SK-N-SH (cell line): ENCODE measurements at regions of chr11 and their contacts with region 1.

Region 1: GRCh38 chr11:35822815-35823495 is 120.9 kb upstream of the LDLRAD3 start:
- DNase-seq: no peak
- H3K4me3 ChIP-seq: no peak overlapping the region
- H3K27ac ChIP-seq: peak overlapping the region in 1 of 2 experiments; percentile 22; a peak in 2 of 4 replicates
- H3K4me1 ChIP-seq: peaks cover 6 to 12% of the 10 kb centered on the region in 2 experiments; a peak in 3 of 4 replicates
- H3K27me3 ChIP-seq: no peaks in the 10 kb centered on the region
- CTCF ChIP-seq: no peak
- EP300 ChIP-seq: no peak
- RAD21 ChIP-seq: no peak

Region 2: DNA sequence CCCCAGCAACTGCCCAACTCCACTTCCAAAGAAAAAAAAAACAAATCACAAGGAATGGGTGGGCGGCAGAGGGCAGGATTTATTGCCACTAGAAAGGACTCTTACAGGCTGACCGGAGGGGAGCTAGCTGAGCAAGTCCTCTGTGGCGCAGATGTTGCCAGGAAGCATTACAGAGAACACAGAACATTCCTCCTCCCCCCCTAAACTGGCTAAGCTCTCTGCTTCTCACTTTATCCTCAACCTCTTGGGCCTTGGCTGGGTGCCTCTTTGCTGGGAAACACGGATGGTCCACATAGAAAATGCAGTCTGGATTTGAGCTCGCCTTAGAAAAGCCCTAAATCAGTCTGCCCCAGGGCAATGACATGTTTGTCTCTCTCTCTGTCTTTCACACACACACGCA is 217.2 kb before region 1 on chr11:
- CTCF ChIA-PET with region 1: interaction called, 10 read pairs
- POLR2A ChIA-PET with region 1: no interaction called
- DNase-seq: no peak
- H3K4me3 ChIP-seq: no peak overlapping the region
- H3K27ac ChIP-seq: no peak overlapping the region
- H3K4me1 ChIP-seq: peaks cover 3 to 5% of the 10 kb centered on the region in 2 experiments; a peak in 2 of 4 replicates
- H3K27me3 ChIP-seq: no peaks in the 10 kb centered on the region
- CTCF ChIP-seq: no peak
- EP300 ChIP-seq: no peak
- RAD21 ChIP-seq: no peak

Region 3: GRCh38 chr11:35800970-35801953 is 21.7 kb before region 1 on chr11:
- CTCF ChIA-PET with region 1: interaction called, 41 read pairs
- POLR2A ChIA-PET with region 1: no interaction called
- DNase-seq: no peak
- H3K4me3 ChIP-seq: no peak overlapping the region
- H3K27ac ChIP-seq: no peak overlapping the region
- H3K4me1 ChIP-seq: peaks cover 0 to 25% of the 10 kb centered on the region in 2 experiments
- H3K27me3 ChIP-seq: no peaks in the 10 kb centered on the region
- CTCF ChIP-seq: no peak
- EP300 ChIP-seq: no peak
- RAD21 ChIP-seq: no peak

Region 4: DNA sequence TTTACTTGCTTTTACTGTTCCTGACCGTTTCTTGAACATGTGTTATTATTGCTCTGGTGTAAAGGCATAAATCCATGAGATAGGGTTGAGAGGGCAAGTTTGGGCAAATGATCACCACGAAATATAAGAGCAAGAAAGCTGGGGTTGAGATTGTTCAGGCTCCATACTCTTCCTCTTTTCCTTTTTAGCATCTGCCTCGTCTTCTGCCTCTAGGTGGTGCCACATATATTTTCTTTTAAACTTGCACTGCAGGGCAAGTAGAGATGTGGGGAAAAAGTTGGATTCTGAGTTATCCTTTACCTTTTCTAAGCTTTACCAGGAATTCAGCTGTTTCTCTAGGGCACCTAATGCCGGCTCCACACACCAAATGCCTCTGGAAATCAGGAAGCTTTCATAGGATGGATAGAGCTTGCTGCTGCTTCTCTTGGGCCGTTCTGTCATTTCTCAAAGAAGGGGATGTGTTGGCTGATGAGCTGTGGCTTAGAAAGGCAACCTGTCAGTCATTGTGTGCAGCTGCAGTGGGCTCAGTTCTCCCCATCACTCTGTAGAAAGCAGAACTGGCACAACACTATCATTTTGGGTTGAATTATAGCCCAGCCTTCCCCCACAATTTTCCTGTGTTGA is 219.1 kb after region 1 on chr11:
- CTCF ChIA-PET with region 1: interaction called, 17 read pairs
- POLR2A ChIA-PET with region 1: no interaction called
- DNase-seq: no peak
- H3K4me3 ChIP-seq: no peak overlapping the region
- H3K27ac ChIP-seq: no peak overlapping the region
- H3K4me1 ChIP-seq: peaks cover 0 to 5% of the 10 kb centered on the region in 2 experiments; a peak in 1 of 4 replicates
- H3K27me3 ChIP-seq: no peaks in the 10 kb centered on the region
- CTCF ChIP-seq: peak; percentile 50
- EP300 ChIP-seq: no peak
- RAD21 ChIP-seq: peak; percentile 49

Region 5: DNA sequence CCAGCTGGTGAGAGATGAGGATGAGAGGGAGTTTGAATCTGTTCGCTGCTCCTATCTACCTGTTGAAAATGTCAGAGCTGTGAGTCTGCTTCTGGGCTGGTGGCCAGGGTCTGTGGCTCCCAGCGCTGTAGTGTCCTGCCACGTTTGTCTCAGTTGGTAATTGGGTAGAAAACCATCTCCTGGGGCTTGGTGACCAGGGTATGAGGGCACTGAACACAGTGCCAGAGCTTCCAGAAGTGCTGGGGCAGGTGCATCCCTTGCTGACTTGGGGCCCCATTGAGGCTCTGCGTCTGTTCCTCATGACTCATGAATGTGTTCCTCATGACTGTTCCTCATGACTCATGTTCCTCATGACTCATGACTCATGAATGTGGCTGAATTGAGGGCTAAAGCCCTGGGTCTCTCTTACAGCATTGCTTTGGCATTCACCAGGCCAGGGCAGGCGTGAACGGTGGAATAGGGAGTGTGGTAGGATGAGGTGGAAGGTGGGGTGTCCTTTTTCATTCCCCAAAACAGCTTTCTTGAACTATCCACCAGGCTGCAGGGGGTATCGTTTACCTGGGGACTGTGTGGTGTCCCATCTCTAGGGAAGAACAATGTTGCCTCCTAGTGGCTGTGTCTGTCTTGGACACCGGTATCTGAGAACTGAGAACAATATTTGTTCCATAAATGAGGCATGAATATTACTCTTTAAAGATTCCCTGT is 326.7 kb after region 1 on chr11:
- CTCF ChIA-PET with region 1: interaction called, 23 read pairs
- POLR2A ChIA-PET with region 1: no interaction called
- DNase-seq: peak; percentile 61
- H3K4me3 ChIP-seq: no peak overlapping the region
- H3K27ac ChIP-seq: peak overlapping the region; percentile 44 to 90; a peak in 3 of 4 replicates
- H3K4me1 ChIP-seq: peaks cover 18 to 19% of the 10 kb centered on the region in 2 experiments; a peak in 3 of 4 replicates
- H3K27me3 ChIP-seq: no peaks in the 10 kb centered on the region
- CTCF ChIP-seq: peak; percentile 75
- EP300 ChIP-seq: peak in 1 of 2 experiments; percentile 97; a peak in 2 of 4 replicates
- RAD21 ChIP-seq: peak; percentile 73

Region 6: DNA sequence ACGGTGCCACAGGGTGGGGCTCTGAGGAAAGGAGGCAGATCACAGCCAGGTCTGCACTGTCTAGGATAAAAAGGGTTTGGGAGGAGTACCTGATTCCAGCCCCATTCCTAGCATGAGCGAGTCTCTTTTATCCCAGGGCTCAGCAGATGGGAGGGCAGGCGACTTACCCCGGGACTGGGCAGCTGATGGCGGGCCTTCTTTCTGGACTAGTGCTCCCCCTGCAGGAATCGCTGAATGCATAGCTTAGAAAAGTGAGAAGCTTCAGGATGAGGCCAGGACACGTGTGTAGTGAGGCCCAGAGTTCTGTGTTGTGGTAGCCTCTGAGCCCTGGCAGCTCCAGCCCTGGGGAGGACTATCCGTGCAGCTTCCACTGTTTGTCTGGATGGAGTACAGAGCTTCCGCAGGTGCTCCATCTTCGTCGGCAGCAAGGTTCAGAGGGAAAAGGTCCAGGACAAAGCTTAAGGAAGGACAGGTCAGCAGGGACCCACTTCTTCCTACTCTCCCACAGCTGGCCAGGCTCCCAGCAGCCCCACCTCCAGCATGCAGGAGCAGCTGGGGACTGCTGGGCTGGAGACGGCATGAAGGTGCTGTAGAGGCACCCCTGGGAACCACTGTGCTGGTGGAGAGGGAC is 435.9 kb after region 1 on chr11:
- CTCF ChIA-PET with region 1: interaction called, 88 read pairs
- POLR2A ChIA-PET with region 1: no interaction called
- DNase-seq: peak; percentile 66
- H3K4me3 ChIP-seq: no peak overlapping the region
- H3K27ac ChIP-seq: no peak overlapping the region
- H3K4me1 ChIP-seq: peaks cover 0 to 5% of the 10 kb centered on the region in 2 experiments; a peak in 2 of 4 replicates
- H3K27me3 ChIP-seq: no peaks in the 10 kb centered on the region
- CTCF ChIP-seq: peak; percentile 62
- EP300 ChIP-seq: no peak
- RAD21 ChIP-seq: peak; percentile 85